ENCODE measurements at regions of chr1 and their contacts with region 1.

Region 1: GRCh38 chr1:1059494-1060280 is 14.4 kb downstream of the RNF223 start:
- DNase-seq: peak; percentile 94 to 97
- H3K4me3 ChIP-seq: peak overlapping the region; percentile 54 to 82 (median 62)
- H3K27ac ChIP-seq: peak overlapping the region in 1 of 5 donors; percentile 12
- H3K4me1 ChIP-seq: peaks cover 41 to 54% (median 53%) of the 10 kb centered on the region in 4 donors
- H3K27me3 ChIP-seq: peaks cover 11 to 82% (median 70%) of the 10 kb centered on the region in 3 donors
- CTCF ChIP-seq: peak in 1 of 7 experiments; percentile 9
- EP300 ChIP-seq: no peak
- POLR2A ChIP-seq: no peak

Region 2: GRCh38 chr1:983799-984473 is 75.8 kb before region 1 on chr1:
- intact Hi-C with region 1: loop called (anchors 5 kb)
- DNase-seq: peak; percentile 53 to 79
- H3K4me3 ChIP-seq: peak overlapping the region in 3 of 4 donors; percentile 14 to 19 (median 17)
- H3K27ac ChIP-seq: no peak overlapping the region
- H3K4me1 ChIP-seq: peaks cover 0 to 8% (median 4%) of the 10 kb centered on the region in 4 donors
- H3K27me3 ChIP-seq: peaks cover 0 to 67% (median 31%) of the 10 kb centered on the region in 3 donors
- CTCF ChIP-seq: peak in 5 of 7 experiments; percentile 34 to 98 (median 87)
- EP300 ChIP-seq: no peak
- POLR2A ChIP-seq: no peak

Region 3: GRCh38 chr1:1013105-1013921 is 46.4 kb before region 1 on chr1 and contains the start of gene ISG15:
- intact Hi-C with region 1: no loop called
- DNase-seq: peak; percentile 93 to 97
- H3K4me3 ChIP-seq: peak within 1 kb of the TSS; percentile 55 to 64 (median 61)
- H3K27ac ChIP-seq: peak within 1 kb of the TSS; percentile 82 to 94 (median 91)
- H3K4me1 ChIP-seq: peaks cover 9 to 33% (median 20%) of the 10 kb centered on the region in 4 donors
- H3K27me3 ChIP-seq: no peaks in the 10 kb centered on the region
- CTCF ChIP-seq: no peak
- EP300 ChIP-seq: no peak
- POLR2A ChIP-seq: peak in 1 of 4 donors; percentile 61
- total RNA-seq, gene ISG15: 16.3 to 84.6 (median 19.3) TPM